Caco-2 (cell line): ENCODE measurements at regions of chr1 and their contacts with region 1.

Region 1: GRCh38 chr1:223199094-223199647 is 56.1 kb upstream of the TLR5 start:
- DNase-seq: no peak
- H3K4me3 ChIP-seq: no peak overlapping the region
- H3K4me3 Mint-ChIP-seq: no peak overlapping the region
- H3K27ac Mint-ChIP-seq: no peak overlapping the region
- H3K4me1 ChIP-seq: peaks cover 26% of the 10 kb centered on the region
- H3K4me1 Mint-ChIP-seq: peaks cover 57% of the 10 kb centered on the region
- H3K27me3 ChIP-seq: no peaks in the 10 kb centered on the region
- H3K27me3 Mint-ChIP-seq: no peaks in the 10 kb centered on the region
- CTCF ChIP-seq: no peak

Region 2: DNA sequence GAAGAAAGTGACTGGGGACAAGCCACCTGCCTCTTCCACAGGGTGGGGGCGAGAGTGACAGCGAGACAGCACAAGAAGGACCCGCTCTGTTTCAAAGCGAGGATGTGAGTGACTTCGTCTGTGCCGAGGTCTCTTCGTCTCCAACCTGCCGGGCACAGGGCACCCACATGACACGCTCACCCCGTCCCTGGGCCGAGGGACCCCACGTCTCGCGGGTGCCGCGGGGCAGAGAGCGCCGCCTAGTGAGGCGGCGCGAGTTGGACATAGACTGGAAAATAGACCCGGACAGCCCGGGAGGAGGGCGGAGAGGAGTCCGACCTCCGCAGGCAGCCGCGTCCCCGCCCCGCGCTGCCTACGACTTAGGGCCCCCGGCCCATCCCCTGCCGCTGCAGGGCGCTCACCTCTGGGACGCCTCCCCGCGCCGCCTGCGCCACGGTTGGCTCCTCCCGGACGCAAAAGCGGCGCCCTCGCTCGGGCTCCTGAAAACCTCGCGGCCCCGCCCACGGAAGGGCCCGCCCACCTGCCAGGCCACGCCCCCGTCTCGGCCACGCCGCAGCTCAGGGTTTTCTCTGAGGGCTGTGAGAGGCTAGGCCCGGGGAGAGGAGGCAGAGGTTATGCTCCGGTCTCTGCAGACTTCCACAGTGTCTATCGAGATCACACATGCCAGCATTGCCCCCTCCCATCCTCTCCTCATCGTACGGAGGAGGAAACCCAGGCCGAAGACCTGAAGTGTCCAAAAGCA is 56.2 kb before region 1 on chr1 and contains the start of gene TLR5:
- CTCF ChIA-PET with region 1: interaction called, 3 read pairs
- POLR2A ChIA-PET with region 1: no interaction called
- intact Hi-C with region 1: loop called (anchors 1 kb)
- DNase-seq: peak; percentile 91 to 93
- H3K4me3 ChIP-seq: peak within 1 kb of the TSS; percentile 51
- H3K4me3 Mint-ChIP-seq: peak within 1 kb of the TSS; percentile 70
- H3K27ac Mint-ChIP-seq: peak within 1 kb of the TSS; percentile 23
- H3K4me1 ChIP-seq: peaks cover 16% of the 10 kb centered on the region
- H3K4me1 Mint-ChIP-seq: peaks cover 13% of the 10 kb centered on the region
- H3K27me3 ChIP-seq: no peaks in the 10 kb centered on the region
- H3K27me3 Mint-ChIP-seq: no peaks in the 10 kb centered on the region
- CTCF ChIP-seq: peak; percentile 77 to 85
- total RNA-seq, gene TLR5: 1.8 TPM in 2 replicates